Activated B cell treated with CpG ODN at 0.5 μM for 24 hours (primary cell): ENCODE measurements at regions of chr14 and their contacts with region 1.

Region 1: DNA sequence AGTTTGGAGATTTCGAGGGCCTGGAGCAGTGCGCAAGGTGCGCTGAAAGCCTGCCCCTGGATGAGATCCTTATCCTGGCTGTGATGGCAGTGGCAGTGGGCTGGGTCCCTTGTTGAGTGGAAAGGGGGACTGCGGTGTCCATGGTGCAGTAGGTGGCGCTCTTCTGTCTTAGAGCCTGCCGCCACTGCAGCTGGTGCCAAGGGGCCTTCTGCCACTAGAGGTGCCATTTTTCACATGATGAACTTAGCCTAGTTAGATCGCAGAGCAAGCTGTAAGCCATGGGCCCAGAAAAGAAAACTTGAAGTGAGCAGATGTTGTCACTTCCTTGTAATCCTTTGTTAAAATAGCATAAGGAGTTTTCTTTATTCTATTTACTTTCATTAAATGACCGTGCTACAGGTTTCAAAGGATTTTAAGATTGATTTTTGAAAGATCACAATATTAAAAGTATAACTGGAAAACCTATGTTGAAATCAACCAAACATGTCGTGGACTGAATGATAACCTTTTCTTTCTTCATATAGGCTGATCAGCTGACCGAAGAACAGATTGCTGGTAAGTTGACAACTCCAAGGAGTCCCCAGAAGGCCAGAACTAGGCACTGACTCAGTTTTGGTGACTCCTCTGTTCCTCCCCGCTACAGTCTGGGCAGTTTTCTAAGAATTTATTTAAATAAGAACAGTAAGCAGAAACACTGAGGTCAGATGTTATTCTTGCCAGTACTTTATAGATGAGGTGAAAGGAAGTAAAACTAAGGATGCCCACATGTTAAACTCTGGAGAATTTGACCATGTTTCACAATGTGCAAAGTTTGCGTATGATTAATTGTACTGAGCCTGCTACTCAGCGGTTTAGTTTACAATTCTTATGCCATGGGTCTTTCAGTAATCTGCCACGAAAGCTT is 3.0 kb downstream of the CALM1 start:
- DNase-seq: peak; percentile 63
- ATAC-seq: peak; percentile 46
- H3K4me3 Mint-ChIP-seq: peak overlapping the region; percentile 91
- H3K27ac Mint-ChIP-seq: peak overlapping the region; percentile 98
- H3K4me1 Mint-ChIP-seq: peaks cover 47% of the 10 kb centered on the region
- H3K27me3 Mint-ChIP-seq: no peaks in the 10 kb centered on the region
- CTCF ChIP-seq: peak; percentile 78

Region 2: GRCh38 chr14:88824314-88825077 is 1575.3 kb before region 1 on chr14 and contains the start of gene TTC8:
- CTCF ChIA-PET with region 1: no interaction called
- POLR2A ChIA-PET with region 1: no interaction called
- intact Hi-C with region 1: loop called (anchors 2 kb)
- DNase-seq: peak; percentile 77
- ATAC-seq: peak; percentile 97
- H3K4me3 Mint-ChIP-seq: peak within 1 kb of the TSS; percentile 88
- H3K27ac Mint-ChIP-seq: peak within 1 kb of the TSS; percentile 100
- H3K4me1 Mint-ChIP-seq: peaks cover 14% of the 10 kb centered on the region
- H3K27me3 Mint-ChIP-seq: peaks cover 11% of the 10 kb centered on the region
- CTCF ChIP-seq: no peak
- total RNA-seq, gene TTC8: 4.8 and 6.0 TPM in 2 replicates

Region 3: GRCh38 chr14:90301668-90302090 is 98.1 kb before region 1 on chr14:
- CTCF ChIA-PET with region 1: no interaction called
- POLR2A ChIA-PET with region 1: no interaction called
- intact Hi-C with region 1: loop called (anchors 1 kb)
- DNase-seq: no peak
- ATAC-seq: no peak
- H3K4me3 Mint-ChIP-seq: no peak overlapping the region
- H3K27ac Mint-ChIP-seq: no peak overlapping the region
- H3K4me1 Mint-ChIP-seq: peaks cover 6% of the 10 kb centered on the region
- H3K27me3 Mint-ChIP-seq: no peaks in the 10 kb centered on the region
- CTCF ChIP-seq: no peak

Region 4: GRCh38 chr14:90518941-90519256 is 119.1 kb after region 1 on chr14:
- CTCF ChIA-PET with region 1: no interaction called
- POLR2A ChIA-PET with region 1: no interaction called
- intact Hi-C with region 1: loop called (anchors 1 kb)
- DNase-seq: no peak
- ATAC-seq: peak; percentile 37
- H3K4me3 Mint-ChIP-seq: no peak overlapping the region
- H3K27ac Mint-ChIP-seq: no peak overlapping the region
- H3K4me1 Mint-ChIP-seq: no peaks in the 10 kb centered on the region
- H3K27me3 Mint-ChIP-seq: no peaks in the 10 kb centered on the region
- CTCF ChIP-seq: no peak

Region 5: DNA sequence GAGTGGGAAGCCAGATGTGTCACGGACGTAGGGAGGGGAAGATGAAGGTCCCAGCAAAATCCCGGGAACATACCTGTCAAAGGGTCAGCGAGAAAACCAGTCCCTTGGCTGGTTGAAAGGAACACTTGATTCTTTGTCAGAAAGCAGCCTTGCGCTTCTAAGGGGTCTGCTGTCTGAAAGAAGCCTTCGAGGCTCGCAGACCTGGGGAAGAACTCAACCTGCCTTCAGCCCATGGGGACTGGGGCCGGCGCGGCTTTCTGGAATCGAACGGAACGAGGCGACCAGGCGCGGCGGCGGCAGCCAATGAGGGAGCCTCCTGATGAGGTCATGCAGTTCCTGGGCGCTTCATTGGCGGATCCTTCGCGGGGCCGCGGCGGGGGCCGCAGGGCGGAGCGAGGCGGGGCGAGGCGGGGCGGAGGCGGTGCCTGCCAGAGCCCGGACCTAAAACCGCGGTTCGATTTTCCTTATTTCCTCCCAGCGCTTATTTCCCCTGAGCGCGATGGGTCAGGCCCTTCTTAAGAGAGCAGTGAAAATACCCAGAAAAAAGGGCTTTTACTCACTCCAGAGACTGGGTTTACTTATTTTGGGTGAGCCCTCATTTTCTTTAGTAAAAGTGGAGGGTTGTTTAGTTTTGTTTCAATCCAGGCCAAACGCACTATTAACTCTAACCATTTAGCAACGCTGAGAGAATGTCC is 428.3 kb after region 1 on chr14:
- CTCF ChIA-PET with region 1: no interaction called
- POLR2A ChIA-PET with region 1: no interaction called
- intact Hi-C with region 1: loop called (anchors 2 kb)
- DNase-seq: peak; percentile 88
- ATAC-seq: peak; percentile 100
- H3K4me3 Mint-ChIP-seq: peak overlapping the region; percentile 81
- H3K27ac Mint-ChIP-seq: peak overlapping the region; percentile 65
- H3K4me1 Mint-ChIP-seq: peaks cover 12% of the 10 kb centered on the region
- H3K27me3 Mint-ChIP-seq: no peaks in the 10 kb centered on the region
- CTCF ChIP-seq: no peak

Region 6: DNA sequence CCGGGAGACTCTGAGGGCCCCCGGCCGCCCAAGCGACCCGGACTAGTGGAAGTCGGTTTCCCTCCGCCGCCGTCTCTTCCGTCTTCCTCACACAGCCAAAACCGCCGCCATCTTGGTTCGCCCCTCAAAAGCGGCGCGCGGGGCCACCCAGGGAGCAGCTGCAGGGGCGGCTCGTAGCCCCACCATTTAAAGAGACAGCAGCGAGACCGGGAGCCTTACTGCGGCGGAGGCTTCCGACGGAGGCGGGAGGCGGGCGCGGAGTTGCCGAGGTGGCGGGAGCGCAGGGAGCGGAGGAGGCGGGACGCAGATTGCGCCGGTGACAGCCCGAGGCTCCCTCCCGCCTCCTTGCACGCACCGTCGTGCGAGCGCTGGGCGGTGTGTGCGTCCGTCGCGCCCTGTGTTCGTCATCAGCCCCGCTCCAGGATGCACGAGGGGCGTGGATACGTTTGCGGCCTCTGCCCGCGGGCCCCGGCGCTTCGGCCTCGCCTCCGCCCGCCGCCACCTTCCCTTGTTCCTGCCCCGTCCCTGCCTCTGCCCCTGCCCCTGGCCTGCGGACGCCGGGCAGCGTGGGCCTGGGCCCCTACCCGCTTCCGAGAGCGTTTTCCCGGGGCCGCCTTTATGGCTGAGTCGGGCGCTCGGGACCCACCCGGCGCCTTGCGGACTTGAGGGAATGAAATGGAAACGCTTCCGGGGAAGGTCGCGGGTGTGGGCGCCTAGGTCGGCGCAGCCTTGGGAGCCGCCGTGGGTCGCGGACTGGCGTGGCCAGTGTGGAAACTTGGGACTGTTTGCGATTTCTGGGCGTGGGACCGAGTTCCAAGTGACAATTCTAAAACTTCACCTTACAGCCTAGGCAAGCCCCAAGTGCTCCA is 1110.6 kb after region 1 on chr14 and contains the start of gene PPP4R3A:
- CTCF ChIA-PET with region 1: no interaction called
- POLR2A ChIA-PET with region 1: no interaction called
- intact Hi-C with region 1: loop called (anchors 5 kb)
- DNase-seq: peak; percentile 91
- ATAC-seq: peak; percentile 85
- H3K4me3 Mint-ChIP-seq: peak within 1 kb of the TSS; percentile 99
- H3K27ac Mint-ChIP-seq: peak within 1 kb of the TSS; percentile 100
- H3K4me1 Mint-ChIP-seq: peaks cover 32% of the 10 kb centered on the region
- H3K27me3 Mint-ChIP-seq: peaks cover 2% of the 10 kb centered on the region
- CTCF ChIP-seq: no peak
- total RNA-seq, gene PPP4R3A: 138 and 141 TPM in 2 replicates